ENCODE measurements at regions of chr1 and their contacts with region 1.

Region 1: DNA sequence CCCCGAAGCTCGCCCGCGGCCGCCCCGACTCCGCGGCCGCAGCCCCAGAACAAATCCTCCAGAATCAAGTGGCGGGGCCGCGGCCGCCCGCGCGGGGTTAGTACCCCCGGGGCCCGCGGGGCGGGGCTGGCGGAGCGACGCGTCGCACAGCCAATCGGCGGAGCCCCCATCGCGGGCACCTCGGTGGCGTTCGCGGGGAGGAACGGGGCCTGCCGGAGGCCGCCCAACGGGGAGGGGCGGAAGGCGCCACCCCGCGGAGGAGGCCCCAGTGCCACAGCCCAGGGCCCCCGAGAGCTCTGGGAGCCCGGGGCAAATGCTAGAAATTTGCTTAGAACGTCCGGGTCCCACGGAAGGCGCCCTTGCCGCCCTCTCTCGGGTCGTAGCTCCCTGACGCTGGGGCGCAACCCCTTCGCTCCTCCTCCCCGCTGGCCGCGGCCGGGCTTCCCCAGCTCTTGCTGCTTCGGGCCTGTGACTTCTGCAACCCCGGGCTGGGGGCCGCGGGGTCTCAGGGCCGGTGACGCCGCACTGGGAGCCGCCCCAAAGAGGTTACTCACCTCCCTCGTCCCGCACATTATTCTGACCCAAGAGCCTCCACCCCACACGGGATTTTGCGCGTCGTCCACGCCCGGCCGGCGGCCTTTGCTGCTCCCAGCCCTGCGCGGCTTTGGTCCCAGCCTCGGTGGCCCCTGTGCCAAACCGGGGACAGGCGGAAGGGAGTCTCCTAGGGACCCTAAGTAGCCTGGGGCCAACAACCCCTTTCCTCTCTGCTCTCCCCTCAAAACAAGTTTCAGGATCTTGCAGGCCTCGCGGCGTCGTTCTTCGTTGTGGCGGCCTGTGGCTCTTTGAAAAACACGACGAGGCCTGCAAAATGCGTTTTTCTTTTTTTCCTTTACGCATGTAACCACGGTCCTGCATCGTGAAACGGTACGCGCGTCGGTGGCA is at the start of gene RUNX3:
- DNase-seq: peak; percentile 45 to 79
- H3K4me3 ChIP-seq: peak within 1 kb of the TSS; percentile 39 to 43
- H3K27ac ChIP-seq: peak within 1 kb of the TSS in 1 of 2 donors; percentile 37
- H3K4me1 ChIP-seq: peaks cover 0 to 35% (median 31%) of the 10 kb centered on the region in 4 donors
- H3K27me3 ChIP-seq: peaks cover 0 to 92% of the 10 kb centered on the region in 2 donors
- CTCF ChIP-seq: no peak

Region 2: DNA sequence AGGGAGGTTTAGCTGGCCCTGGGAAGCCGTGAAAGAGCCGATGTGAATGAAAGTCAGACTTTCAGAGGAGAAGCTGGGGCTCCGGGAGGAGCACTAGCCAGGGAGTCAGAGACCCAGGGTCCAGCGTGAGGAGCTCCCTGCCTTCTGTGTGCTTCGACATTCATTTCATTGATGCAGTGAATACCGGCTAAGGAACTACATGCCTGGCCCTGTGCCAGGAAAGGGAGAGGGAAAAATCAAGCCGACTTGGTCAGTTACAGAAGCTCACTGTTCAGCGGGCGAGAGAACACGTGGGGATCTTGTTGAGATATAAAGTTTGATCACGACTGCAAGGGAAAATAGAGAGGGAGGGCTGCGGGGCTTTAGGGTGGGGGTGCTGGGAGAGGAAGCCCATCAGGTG is 76.3 kb after region 1 on chr1:
- intact Hi-C with region 1: no loop called
- DNase-seq: peak in 1 of 2 donors; percentile 41
- H3K4me3 ChIP-seq: no peak overlapping the region
- H3K27ac ChIP-seq: no peak overlapping the region
- H3K4me1 ChIP-seq: peaks cover 0 to 6% (median 0%) of the 10 kb centered on the region in 4 donors
- H3K27me3 ChIP-seq: peaks cover 0 to 41% of the 10 kb centered on the region in 2 donors
- CTCF ChIP-seq: no peak

Region 3: GRCh38 chr1:25037174-25038074 is 106.9 kb after region 1 on chr1:
- intact Hi-C with region 1: loop called (anchors 5 kb)
- DNase-seq: no peak
- H3K4me3 ChIP-seq: no peak overlapping the region
- H3K27ac ChIP-seq: no peak overlapping the region
- H3K4me1 ChIP-seq: no peaks in the 10 kb centered on the region
- H3K27me3 ChIP-seq: peaks cover 0 to 42% of the 10 kb centered on the region in 2 donors
- CTCF ChIP-seq: peak in 1 of 2 experiments; percentile 19

Region 4: DNA sequence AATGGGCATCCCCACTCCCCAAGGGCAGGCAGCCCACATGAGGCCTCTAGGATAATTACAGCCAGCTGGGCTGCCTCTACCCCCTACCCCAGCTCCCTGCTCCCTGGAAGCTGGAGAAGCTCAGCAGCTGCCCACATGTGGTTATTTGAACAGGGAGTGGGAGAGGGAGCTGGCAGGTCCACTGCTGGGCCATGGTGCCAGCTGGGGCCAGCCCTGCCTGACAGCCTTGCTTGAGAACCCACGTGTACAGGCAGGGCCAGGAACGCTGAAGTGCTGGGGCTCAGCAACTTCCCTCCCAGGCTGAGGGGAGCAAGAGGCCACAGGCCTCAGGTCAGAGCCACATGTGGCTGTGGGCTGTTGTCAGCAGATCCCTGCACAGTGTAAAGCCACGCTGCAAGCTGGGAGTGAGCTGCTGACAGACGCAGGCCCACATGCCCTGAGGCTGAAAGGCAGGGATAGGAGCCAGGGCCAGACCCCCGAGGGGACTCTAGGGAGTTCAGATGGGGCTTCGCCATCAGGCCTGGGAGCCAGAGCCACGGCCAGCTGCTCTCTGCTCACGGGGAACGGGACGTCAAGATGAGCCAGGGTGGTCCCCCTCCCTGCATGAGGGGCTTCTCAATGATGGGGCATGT is 172.8 kb after region 1 on chr1:
- intact Hi-C with region 1: loop called (anchors 5 kb)
- DNase-seq: no peak
- H3K4me3 ChIP-seq: no peak overlapping the region
- H3K27ac ChIP-seq: no peak overlapping the region
- H3K4me1 ChIP-seq: no peaks in the 10 kb centered on the region
- H3K27me3 ChIP-seq: peaks cover 0 to 59% of the 10 kb centered on the region in 2 donors
- CTCF ChIP-seq: no peak

Region 5: GRCh38 chr1:25204797-25205480 is 274.5 kb after region 1 on chr1:
- intact Hi-C with region 1: loop called (anchors 5 kb)
- DNase-seq: no peak
- H3K4me3 ChIP-seq: no peak overlapping the region
- H3K27ac ChIP-seq: no peak overlapping the region
- H3K4me1 ChIP-seq: peaks cover 0 to 2% (median 0%) of the 10 kb centered on the region in 4 donors
- H3K27me3 ChIP-seq: peaks cover 0 to 4% of the 10 kb centered on the region in 2 donors
- CTCF ChIP-seq: peak; percentile 63 to 74

Region 6: DNA sequence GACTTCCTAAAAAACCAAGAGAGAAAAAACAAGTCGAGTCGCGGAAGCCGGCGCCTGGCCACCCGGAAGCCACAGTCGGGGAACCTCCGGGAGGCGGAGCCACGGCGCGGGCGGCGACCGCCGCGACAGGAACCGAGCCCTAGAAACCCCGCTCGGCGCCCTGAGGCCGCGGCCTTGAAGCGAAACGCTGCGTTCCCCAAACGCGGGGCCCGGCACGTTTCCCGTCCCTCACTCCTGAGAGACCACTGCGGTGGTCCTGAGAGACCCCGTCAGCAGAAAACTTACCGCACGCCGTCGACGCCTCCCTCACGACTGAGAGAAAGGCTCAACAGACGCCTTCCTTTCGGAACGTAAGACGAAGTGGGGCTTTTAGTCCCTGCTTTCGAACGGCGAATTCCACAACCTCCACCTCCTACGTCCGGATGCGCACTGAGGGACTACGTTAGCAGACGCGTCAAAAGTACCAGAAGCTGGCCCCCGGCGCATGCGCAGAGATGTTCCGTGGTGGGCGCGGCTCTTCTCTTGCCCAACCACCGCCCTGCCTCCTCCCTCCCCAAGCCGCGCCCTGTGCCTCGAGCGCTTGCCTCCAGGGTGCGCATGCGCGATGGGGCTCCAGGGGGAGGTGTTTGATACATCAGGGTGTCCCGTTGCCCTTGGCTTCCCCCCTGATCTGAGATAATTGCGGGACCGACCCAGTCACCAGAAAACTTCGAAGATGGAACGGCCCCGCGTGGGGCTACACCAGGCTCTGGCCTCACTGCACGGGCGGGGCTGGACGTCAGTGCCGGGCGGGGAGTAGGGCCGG is 316.8 kb after region 1 on chr1 and contains the start of gene RSRP1:
- intact Hi-C with region 1: no loop called
- DNase-seq: peak; percentile 99 to 100
- H3K4me3 ChIP-seq: peak within 1 kb of the TSS; percentile 77 to 78
- H3K27ac ChIP-seq: peak within 1 kb of the TSS; percentile 97 to 99
- H3K4me1 ChIP-seq: peaks cover 0 to 34% (median 25%) of the 10 kb centered on the region in 4 donors
- H3K27me3 ChIP-seq: no peaks in the 10 kb centered on the region
- CTCF ChIP-seq: peak in 1 of 2 experiments; percentile 21

Measured in tibial artery (tissue), 4 donors.